Pancreas (tissue), 10 donors: ENCODE measurements at regions of chr15 and their contacts with region 1.

Region 1: GRCh38 chr15:38714309-38715072 is 149.9 kb upstream of the RASGRP1 start:
- DNase-seq: no peak
- ATAC-seq: peak in 1 of 4 donors; percentile 51
- H3K4me3 ChIP-seq: no peak overlapping the region
- H3K27ac ChIP-seq: no peak overlapping the region
- H3K4me1 ChIP-seq: no peaks in the 10 kb centered on the region
- H3K27me3 ChIP-seq: no peaks in the 10 kb centered on the region
- CTCF ChIP-seq: no peak

Region 2: DNA sequence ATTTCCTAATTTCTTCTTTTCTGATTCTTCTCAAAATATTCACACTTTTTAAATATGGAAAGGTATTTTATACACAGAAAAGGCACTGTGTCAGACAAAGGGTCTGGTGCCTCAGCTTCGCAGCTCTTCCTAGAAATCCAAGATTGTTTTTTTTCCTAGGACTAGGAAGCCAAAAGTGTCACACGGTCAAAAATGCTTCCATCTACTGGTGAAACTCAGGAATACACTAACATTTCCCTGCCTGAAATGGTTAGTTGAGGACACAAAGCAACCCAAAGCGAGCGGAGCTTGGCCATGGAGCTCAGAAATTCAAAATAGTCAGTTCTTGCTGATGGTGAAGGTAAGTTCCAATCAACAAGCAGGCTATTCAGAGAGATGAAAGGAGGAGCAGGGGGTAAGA is 276.6 kb after region 1 on chr15:
- intact Hi-C with region 1: loop called in 1 of 3 experiments (anchors 10 kb)
- DNase-seq: no peak
- ATAC-seq: peak; percentile 31 to 58 (median 40)
- H3K4me3 ChIP-seq: no peak overlapping the region
- H3K27ac ChIP-seq: no peak overlapping the region
- H3K4me1 ChIP-seq: peaks cover 0 to 4% (median 0%) of the 10 kb centered on the region in 3 donors
- H3K27me3 ChIP-seq: no peaks in the 10 kb centered on the region
- CTCF ChIP-seq: peak in 1 of 4 donors; percentile 15

Region 3: DNA sequence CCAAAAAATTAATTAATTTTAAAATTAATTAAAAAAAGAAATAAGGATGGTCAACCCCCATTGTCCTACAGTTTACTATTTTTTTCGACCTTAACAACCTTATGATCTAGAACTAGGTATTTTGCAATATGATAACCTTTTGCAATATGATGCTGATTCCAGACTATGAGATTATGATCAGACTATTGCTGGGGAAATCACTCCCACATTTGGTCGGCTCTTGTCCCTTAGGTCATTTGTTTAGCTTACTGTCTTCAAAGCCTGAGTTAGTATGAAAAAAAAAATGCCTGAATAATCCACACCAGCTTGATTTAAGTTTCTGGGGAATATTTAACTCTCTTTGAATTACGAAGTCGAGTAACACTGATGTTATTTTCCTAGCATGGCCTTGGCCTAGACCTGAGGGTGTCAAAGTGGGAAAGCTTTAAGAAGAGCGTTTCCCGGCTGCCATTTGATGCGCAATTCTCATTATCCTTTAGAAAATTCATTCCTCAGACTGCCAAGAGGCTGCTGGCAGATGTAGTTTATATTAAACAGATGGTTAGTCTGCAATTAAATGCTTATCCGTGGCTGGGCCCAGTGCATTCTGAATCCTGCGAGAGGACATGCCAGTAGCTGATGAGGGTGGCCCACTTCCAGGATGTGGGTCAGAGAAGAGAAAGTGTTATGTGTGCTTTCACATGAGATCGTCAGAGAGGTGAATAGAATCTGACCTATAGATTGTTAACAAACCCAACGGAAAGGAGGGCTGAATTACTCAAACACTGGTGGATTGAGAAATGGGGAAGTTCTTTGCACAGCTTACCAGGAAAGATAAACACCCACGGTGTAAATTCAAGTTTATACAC is 370.4 kb after region 1 on chr15:
- intact Hi-C with region 1: no loop called
- DNase-seq: peak in 1 of 6 donors; percentile 8
- ATAC-seq: peak in 1 of 4 donors; percentile 51
- H3K4me3 ChIP-seq: no peak overlapping the region
- H3K27ac ChIP-seq: no peak overlapping the region
- H3K4me1 ChIP-seq: no peaks in the 10 kb centered on the region
- H3K27me3 ChIP-seq: no peaks in the 10 kb centered on the region
- CTCF ChIP-seq: no peak

Region 4: DNA sequence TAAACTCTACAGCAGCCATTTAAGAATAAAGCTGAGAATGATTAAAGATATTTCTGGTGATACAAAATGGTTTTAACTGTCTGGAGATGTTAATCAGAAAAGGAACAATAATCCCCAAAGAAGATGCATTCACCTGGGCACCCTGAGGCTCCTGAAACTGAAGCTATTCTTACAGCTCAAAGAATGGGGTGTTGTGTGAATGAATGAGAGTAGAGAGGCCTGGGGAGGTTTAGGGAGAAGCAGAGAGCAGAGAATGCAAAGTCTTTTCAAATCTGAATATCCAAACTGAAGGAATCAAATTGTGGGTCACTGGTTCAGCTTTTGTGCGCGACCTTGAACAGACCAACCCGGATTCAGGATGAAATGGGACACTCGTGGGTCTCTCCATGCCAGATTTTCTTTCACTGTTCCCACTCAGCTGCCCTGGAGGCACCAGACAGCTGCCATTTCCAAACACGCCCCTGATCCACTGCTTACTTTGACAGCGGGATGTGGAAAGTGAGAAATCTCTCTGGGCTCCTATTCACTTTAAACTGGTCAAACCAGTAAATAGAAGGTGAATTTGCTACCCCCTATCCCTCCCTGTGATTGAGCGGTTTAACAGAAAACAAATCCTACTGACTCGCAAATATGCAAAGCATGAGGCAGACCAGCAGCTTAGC is 380.9 kb after region 1 on chr15:
- intact Hi-C with region 1: no loop called
- DNase-seq: no peak
- ATAC-seq: peak in 1 of 4 donors; percentile 14
- H3K4me3 ChIP-seq: no peak overlapping the region
- H3K27ac ChIP-seq: no peak overlapping the region
- H3K4me1 ChIP-seq: no peaks in the 10 kb centered on the region
- H3K27me3 ChIP-seq: no peaks in the 10 kb centered on the region
- CTCF ChIP-seq: no peak